Colonic mucosa (tissue), 4 donors: ENCODE measurements at regions of chr19 and their contacts with region 1.

Region 1: DNA sequence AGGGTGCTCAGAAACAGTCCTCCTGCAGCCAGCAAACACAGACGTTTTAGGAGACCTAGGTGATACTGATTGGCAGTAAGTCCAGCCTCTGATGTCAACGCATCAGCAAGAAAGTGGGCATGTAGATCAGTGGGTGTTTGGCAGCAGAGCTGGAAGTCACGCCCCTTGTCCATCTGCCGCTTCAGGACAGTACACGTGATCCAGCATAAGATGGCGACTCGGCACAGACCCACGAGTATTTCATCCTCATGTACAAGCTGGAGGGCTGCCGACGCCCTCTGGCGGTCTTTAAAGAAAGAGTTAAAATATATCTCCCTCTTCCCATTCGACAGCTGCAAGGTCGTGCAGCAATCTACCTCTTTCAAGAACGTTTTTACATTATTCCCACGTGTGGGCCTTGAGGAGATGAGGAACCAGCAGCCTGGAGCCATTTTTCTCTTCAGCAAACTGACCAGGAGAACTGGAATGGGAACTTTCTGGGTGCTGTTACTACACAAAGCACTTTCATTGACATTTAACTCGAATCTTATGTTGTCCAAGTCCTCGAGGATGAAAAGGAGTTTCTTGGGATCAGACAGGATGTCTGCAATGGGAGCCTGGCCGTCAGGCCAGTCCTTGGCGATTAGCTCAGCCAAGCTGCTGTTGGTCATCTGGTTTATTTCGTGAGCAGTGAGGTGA is 22.3 kb downstream of the NLRP11 start:
- DNase-seq: peak; percentile 63
- H3K4me3 ChIP-seq: no peak overlapping the region
- H3K27ac ChIP-seq: no peak overlapping the region
- H3K4me1 ChIP-seq: no peaks in the 10 kb centered on the region
- H3K27me3 ChIP-seq: no peaks in the 10 kb centered on the region
- CTCF ChIP-seq: peak; percentile 43

Region 2: GRCh38 chr19:55632463-55632834 is 177.1 kb before region 1 on chr19:
- intact Hi-C with region 1: loop called (anchors 5 kb)
- DNase-seq: peak; percentile 97
- H3K4me3 ChIP-seq: no peak overlapping the region
- H3K27ac ChIP-seq: no peak overlapping the region
- H3K4me1 ChIP-seq: peaks cover 12% of the 10 kb centered on the region
- H3K27me3 ChIP-seq: no peaks in the 10 kb centered on the region
- CTCF ChIP-seq: peak; percentile 72

Region 3: DNA sequence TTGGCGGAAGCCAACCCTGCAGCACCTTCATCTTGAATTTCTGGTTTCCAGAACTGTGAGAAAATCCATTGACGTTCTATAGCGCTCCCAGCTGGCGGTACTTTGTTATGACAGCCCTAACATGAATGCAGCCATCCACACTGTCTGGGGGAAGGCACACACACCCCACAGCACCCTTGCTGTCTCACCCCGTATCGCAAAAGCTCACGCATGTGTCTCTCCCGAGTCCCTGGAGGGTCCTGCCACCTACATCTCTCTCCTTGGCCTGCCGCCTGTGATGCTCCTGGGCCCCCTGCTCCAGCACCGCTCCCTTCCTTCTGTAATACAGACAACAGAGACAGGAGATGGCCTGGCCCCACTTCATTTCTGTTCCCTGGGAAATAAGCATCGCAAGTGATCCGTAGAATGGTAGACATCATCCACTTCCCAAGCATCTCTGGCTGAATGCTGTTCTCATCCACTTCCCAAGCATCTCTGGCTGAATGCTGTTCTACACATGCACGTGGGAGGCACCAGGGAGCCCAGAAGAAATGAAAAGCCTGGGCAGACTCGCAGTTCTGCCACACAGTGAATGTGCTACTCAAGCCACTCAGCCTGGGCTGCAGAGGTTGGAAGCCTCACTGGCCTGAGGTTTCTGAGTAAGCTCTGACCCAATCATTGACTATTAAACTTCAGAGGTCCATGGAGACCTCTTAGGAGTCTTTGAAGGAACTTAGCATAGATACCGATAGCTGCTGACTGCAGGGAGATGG is 104.8 kb before region 1 on chr19:
- intact Hi-C with region 1: loop called (anchors 5 kb)
- DNase-seq: no peak
- H3K4me3 ChIP-seq: no peak overlapping the region
- H3K27ac ChIP-seq: no peak overlapping the region
- H3K4me1 ChIP-seq: no peaks in the 10 kb centered on the region
- H3K27me3 ChIP-seq: no peaks in the 10 kb centered on the region
- CTCF ChIP-seq: no peak